Cardiac septum (tissue), 1 donor: ENCODE measurements at regions of chr3 and their contacts with region 1.

Region 1: GRCh38 chr3:151439652-151440129 is 21.2 kb downstream of the IGSF10 start:
- DNase-seq: no peak

Region 2: DNA sequence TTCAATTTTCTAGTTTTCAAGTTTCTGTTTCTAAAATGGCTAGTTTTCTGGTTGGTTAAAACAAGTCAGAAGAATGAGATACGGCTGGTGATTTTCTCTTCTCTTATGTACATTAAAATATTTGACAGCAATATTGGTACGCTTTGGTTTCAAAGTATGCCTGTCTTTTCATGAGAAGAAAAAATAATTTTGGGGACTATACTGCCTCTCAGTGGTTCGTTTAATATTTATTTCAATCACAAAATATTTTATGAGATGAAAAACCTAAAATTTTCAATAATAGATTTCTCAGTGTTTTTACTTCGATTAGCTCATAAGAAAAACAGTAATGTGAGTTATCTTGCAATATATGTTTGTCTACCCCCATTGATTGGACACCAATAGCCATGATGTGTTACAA is 221.2 kb after region 1 on chr3:
- intact Hi-C with region 1: loop called (anchors 5 kb)
- DNase-seq: no peak

Region 3: DNA sequence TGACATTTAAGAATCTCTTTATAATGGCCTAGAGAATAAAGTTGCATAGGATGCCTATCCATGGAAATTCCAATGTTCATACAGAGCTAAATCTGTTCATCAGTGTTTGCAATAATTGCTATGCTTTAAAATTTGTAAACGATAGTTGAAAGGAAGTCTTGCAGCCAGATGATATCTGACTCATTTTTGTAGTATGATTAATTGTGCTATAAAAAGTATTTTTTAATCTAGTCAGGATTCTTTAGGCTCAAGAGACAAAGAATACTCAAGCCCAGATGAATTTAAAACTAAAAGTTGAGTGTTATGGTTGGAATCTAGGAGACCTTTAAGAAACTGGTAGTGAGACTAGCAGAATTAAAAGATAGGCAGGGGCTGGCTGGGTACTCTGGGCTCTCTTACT is 484.2 kb after region 1 on chr3:
- intact Hi-C with region 1: loop called (anchors 5 kb)
- DNase-seq: no peak